Activated CD4-positive, alpha-beta T cell treated with anti-CD3 and anti-CD28 coated beads for 36 hours (primary cell): ENCODE measurements at regions of chr3 and their contacts with region 1.

Region 1: DNA sequence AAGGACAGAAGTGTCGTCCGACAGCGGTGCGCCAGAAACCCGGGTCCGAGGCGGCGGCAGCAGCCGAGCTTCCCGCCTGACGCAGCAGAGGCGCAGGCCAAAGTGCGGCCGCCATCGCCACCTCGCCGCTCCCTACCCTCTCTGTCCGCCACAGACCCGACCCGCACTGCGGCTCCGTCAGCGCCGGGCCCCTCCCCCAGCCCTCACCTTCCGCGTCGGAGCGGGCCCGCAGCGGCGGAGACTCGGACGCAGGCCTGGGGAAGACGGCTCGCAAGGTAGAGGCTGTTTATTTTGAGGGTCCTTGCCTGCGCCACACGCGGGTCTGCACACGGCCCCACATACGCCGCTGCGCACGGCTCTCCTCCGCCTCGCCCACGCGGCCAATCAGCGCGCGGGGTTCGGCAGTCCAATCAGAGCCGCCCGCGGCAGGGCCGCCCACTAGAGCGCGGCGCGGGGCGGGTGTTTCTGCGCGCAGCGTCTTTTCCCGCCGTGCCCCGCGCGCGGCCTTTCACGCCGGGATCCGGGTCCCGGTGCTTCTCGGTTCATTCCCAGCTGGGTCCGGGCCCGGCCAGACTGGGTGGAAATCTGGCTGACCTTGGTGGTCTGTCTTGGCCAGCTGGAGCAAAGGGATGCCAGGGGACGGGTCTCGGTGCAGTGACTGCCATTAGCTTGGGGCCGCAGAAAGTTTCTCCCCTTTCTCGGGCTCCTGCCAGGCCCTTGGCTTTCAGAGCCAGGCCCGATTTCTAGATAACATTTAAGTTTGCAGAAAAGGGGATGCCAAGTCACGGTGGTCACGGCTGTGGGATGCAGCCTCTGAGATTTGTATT is at the start of gene CNBP:
- DNase-seq: peak; percentile 96
- ATAC-seq: peak; percentile 95
- H3K4me3 Mint-ChIP-seq: peak within 1 kb of the TSS; percentile 96
- H3K27ac Mint-ChIP-seq: peak within 1 kb of the TSS; percentile 99
- H3K4me1 Mint-ChIP-seq: peaks cover 29% of the 10 kb centered on the region
- H3K27me3 Mint-ChIP-seq: no peaks in the 10 kb centered on the region
- total RNA-seq, gene CNBP: 305 to 379 TPM

Region 2: DNA sequence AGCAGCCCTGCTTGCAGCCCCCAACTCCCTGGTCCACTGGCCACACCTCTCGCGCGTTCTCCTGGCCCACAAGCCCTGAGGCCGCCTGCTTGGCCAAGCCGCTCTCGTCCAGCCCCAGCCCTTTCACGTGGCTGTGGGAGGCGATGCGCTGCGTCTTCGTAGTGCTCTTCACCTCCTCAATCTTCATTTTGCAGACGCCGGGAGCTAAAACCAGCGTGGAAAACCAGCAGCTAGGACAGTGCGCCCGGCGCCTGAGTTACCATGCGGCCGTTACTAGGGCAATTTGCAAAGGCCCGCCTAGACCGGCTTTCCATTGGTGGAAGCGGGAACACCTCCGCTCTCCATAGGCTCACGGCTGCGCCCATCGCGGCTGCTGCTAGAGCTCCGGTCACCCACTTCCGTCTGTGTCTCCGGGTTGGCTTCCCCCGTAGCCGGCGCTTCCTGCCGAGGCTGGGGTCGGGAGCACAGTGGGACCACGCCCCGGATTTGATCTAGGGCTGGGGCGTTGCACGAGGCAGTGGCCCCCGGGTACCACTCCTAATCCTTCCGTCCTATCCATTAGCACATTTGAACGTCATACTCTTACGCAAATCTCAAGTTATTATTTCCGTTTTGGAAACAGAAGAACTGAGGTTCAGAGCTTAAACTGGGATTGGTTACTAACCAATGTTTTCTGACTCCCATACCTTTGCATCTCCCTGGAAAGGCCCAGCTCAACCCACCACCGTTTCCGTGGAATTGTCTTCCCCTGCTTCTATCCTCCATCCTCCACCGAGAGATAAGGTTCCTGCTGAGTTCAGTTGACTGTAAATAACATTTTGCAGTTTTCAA is 1060.0 kb before region 1 on chr3 and contains the start of gene RUVBL1:
- CTCF ChIA-PET with region 1: no interaction called
- POLR2A ChIA-PET with region 1: no interaction called
- intact Hi-C with region 1: loop called in 1 of 2 experiments (anchors 1 kb)
- DNase-seq: peak; percentile 99
- ATAC-seq: peak; percentile 99
- H3K4me3 Mint-ChIP-seq: peak within 1 kb of the TSS; percentile 99
- H3K27ac Mint-ChIP-seq: peak within 1 kb of the TSS; percentile 96
- H3K4me1 Mint-ChIP-seq: peaks cover 30% of the 10 kb centered on the region
- H3K27me3 Mint-ChIP-seq: no peaks in the 10 kb centered on the region
- total RNA-seq, gene RUVBL1: 97.0 to 99.9 TPM

Region 3: DNA sequence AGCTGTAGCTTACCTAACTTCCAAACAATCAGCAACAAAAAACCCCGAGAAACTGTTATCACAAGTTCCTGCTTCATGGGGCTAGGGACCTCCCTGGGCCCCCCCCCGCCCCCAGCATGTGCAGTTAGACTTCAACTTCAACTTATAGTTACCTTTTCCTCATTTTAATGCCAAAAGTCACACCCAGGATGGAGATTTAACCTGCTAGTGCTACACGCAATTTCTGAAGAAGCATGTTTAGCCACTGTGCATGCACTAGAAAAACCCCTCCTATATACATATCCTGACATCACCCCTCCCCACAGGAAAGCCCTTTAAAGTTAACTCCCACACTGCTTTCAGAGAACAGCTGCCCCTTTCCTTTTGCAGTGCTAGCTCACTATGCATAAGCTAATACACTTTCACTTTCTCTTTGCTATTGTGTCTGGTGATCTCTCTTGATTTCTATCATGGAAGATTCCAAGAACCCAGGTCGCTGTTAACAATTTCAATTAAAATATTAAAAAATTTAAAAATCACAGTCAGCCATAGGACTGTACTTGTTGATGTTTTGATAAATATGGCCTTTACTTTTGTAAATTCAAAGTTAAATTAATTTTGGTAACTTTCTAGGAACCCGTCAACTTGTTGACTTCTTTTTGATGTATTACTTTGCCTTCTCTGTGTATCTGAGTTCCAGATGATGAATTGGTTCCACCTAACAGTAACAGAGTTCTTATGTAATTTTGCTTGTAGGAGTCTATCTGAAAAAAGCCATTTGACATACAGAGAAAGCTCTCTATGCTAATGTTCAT is 379.6 kb before region 1 on chr3:
- CTCF ChIA-PET with region 1: no interaction called
- POLR2A ChIA-PET with region 1: no interaction called
- intact Hi-C with region 1: loop called in 1 of 2 experiments (anchors 2 kb)
- DNase-seq: peak; percentile 78
- ATAC-seq: peak; percentile 76
- H3K4me3 Mint-ChIP-seq: peak overlapping the region; percentile 69
- H3K27ac Mint-ChIP-seq: peak overlapping the region; percentile 97
- H3K4me1 Mint-ChIP-seq: peaks cover 86% of the 10 kb centered on the region
- H3K27me3 Mint-ChIP-seq: no peaks in the 10 kb centered on the region

Region 4: DNA sequence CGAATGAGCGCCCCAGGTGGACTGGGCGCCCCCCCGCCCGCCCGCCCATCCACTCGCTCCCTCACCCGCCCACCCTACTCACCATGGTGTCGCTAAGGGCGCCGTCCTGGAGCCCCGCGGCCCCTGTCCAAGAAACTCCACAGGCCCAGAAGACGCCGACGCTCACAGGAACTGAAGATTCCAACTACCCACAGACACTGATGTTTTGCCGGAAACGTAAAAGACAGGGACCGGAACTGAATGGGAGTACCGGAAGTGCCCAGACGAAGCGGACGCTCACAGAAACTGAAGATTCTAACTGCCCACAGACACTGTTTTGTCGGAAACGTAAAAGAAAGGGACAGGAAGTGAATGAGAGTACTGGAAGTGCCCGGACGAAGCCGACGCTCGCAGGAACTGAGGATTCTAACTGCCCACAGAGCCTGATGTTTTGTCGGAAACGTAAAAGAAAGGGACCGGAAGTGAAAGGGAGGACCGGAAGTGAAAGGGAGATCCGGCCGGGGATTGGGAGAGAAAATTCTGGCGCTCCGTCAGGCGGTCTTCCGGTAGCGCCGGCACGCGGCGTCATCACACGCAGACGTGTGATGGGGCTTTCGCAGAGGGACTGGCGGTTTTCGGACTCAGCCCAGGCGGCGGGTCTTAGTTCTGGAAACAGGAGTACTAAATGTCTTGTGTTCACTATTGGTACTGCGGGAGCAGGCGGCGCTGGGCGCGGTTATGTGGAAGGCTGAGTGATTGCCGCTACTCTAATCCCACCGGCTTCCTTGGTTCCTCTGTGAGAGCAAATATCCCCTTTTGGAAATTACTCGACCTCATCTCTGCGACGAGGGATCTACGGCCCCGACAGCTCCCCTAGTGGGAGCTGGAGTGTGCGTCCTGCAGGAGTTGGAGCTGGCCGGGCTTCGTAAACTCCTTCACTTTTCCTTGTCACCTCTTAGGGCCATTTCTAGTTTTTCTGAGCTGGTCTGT is 22.6 kb before region 1 on chr3 and contains the start of gene ISY1:
- CTCF ChIA-PET with region 1: interaction called, 49 read pairs
- POLR2A ChIA-PET with region 1: interaction called, 5 read pairs
- intact Hi-C with region 1: loop called (anchors 1 kb)
- DNase-seq: peak; percentile 93
- ATAC-seq: peak; percentile 81
- H3K4me3 Mint-ChIP-seq: peak within 1 kb of the TSS; percentile 93
- H3K27ac Mint-ChIP-seq: peak within 1 kb of the TSS; percentile 98
- H3K4me1 Mint-ChIP-seq: peaks cover 30% of the 10 kb centered on the region
- H3K27me3 Mint-ChIP-seq: no peaks in the 10 kb centered on the region
- total RNA-seq, gene ISY1: 44.9 to 65.5 TPM

Region 5: GRCh38 chr3:129211772-129212171 is 28.0 kb after region 1 on chr3:
- CTCF ChIA-PET with region 1: no interaction called
- POLR2A ChIA-PET with region 1: no interaction called
- intact Hi-C with region 1: no loop called
- DNase-seq: no peak
- ATAC-seq: no peak
- H3K4me3 Mint-ChIP-seq: no peak overlapping the region
- H3K27ac Mint-ChIP-seq: no peak overlapping the region
- H3K4me1 Mint-ChIP-seq: no peaks in the 10 kb centered on the region
- H3K27me3 Mint-ChIP-seq: no peaks in the 10 kb centered on the region

Region 6: DNA sequence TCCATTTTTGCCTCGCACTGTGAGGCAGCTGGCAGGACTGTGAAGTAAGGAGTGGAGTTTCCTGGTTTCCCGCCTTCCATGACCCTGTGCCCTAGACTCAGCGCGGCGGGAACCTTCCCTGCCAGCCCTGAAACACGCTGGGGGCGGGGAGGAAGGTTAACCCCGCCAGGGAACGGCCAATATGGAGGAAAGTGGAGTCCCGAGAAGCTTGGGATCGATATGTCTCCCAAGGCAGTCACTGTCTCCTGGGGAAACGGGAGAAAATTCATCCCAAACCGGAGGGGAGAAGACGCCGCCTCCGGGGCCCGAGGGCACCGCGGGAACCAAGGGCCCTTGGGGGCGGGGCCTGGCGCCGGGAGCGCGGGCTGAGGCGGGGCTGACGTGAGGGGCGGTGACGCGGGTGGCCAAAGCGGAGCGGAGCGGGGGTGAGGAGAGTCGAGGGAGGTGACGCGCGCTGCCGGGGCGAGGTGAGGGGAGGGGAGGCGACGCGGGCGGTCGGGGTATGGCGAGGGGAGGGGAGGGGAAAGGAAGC is 94.7 kb after region 1 on chr3 and contains the start of gene HMCES:
- CTCF ChIA-PET with region 1: interaction called, 3 read pairs
- POLR2A ChIA-PET with region 1: interaction called, 3 read pairs
- intact Hi-C with region 1: loop called (anchors 1 kb)
- DNase-seq: peak; percentile 98
- ATAC-seq: peak; percentile 84
- H3K4me3 Mint-ChIP-seq: peak within 1 kb of the TSS; percentile 89
- H3K27ac Mint-ChIP-seq: peak within 1 kb of the TSS; percentile 95
- H3K4me1 Mint-ChIP-seq: peaks cover 55% of the 10 kb centered on the region
- H3K27me3 Mint-ChIP-seq: no peaks in the 10 kb centered on the region
- total RNA-seq, gene HMCES: 43.1 to 56.7 TPM